ENCODE measurements at regions of chr5 and their contacts with region 1.

Region 1: DNA sequence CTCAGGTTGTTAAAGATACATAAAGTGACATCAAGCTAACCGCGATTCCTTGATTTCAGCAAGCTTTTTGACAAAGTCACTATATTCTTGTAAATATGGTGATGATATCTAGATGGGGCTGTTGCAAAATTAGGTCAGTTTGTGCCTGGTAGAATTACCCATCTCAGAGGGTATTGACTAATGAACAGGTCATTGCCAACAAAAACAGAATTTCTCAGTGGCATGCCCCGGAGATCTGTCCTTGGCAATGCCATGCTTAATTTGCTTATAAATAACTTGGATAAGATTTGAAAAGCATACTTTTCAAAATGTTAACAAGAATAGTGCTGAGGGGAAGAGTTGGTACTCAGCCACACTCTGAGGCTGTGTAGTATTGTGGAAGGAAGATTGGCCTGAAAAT is 783.3 kb upstream of the SEMA6A start:
- DNase-seq: no peak
- ATAC-seq: no peak
- H3K4me3 ChIP-seq: no peak overlapping the region
- H3K27ac ChIP-seq: no peak overlapping the region
- H3K4me1 ChIP-seq: no peaks in the 10 kb centered on the region
- H3K27me3 ChIP-seq: no peaks in the 10 kb centered on the region
- CTCF ChIP-seq: no peak
- EP300 ChIP-seq: no peak
- POLR2A ChIP-seq: no peak
- RAD21 ChIP-seq: no peak

Region 2: DNA sequence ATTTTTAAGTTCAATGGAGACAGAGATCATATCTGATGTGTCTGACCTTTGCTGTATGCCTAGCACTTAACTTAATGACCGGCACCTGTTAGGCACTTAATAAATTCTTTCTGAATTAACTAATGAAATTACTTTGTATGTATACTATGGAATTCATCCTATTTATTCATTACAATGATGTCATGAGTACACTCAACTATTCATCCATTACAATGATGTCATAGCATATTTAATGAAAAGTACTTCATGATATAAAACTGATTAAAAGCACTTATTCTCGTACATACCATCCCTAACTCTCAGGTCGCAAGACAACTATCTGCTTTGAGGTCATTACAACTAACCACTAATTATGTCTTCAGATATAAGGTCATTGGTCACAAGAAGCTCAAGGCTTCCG is 498.8 kb after region 1 on chr5:
- CTCF ChIA-PET with region 1: no interaction called
- POLR2A ChIA-PET with region 1: interaction called, 11 read pairs
- RAD21 ChIA-PET with region 1: no interaction called
- SMC1A ChIA-PET with region 1: no interaction called
- in situ Hi-C with region 1: no loop called
- intact Hi-C with region 1: no loop called
- DNase-seq: no peak
- ATAC-seq: no peak
- H3K4me3 ChIP-seq: no peak overlapping the region
- H3K27ac ChIP-seq: no peak overlapping the region
- H3K4me1 ChIP-seq: no peaks in the 10 kb centered on the region
- H3K27me3 ChIP-seq: no peaks in the 10 kb centered on the region
- CTCF ChIP-seq: no peak
- EP300 ChIP-seq: no peak
- POLR2A ChIP-seq: no peak
- RAD21 ChIP-seq: no peak